Activated CD4-positive, alpha-beta T cell treated with anti-CD3 and anti-CD28 coated beads, Interleukin-2, amount 10 ng/mL, durations not matched to agents 24 days and 14 days (primary cell): ENCODE measurements at regions of chr2 and their contacts with region 1.

Region 1: GRCh38 chr2:144183727-144184126 is 336.2 kb downstream of the ZEB2 start:
- DNase-seq: peak; percentile 92
- H3K4me3 Mint-ChIP-seq: peak overlapping the region; percentile 60
- H3K27ac Mint-ChIP-seq: peak overlapping the region; percentile 86
- H3K4me1 Mint-ChIP-seq: peaks cover 28% of the 10 kb centered on the region
- H3K27me3 Mint-ChIP-seq: no peaks in the 10 kb centered on the region

Region 2: DNA sequence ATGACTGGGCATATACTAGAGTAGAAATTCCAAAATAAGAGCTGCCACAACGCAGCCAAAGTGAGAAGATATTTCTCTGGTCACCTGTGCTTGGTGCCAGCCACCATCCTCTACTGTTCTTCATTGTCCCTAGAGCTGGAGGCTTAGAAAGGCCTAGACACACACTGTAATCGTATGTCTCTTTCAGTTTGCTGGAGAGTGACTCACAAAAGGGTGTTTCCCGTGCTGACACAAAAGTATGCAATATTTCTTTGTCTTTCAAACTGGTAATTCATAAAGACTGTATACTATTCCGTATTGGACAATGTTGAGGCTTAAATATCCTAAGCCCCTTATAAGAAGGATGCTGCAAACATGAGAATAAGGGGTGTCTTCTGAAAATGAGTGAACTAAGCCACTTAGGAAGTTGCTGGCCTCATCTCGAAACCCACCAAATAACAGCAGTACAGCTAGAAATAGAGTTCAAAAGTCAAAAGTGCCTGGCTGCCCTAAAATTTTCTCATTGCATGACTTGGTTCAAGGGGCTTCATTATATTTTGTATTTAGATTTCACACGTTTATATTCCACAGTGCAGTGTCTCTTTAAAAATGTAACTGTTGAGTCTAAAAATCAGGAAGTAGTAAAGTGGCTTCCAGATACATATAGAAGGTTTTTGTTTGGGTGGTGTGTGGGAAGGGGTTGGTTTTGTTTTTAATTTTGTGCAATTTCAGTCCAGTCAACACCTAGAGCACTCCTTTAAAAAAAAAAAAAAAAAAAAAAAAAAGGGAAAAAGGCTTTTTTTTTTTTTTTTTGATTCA is 453.4 kb before region 1 on chr2:
- intact Hi-C with region 1: loop called (anchors 1 kb)
- DNase-seq: peak; percentile 63
- H3K4me3 Mint-ChIP-seq: peak overlapping the region; percentile 47
- H3K27ac Mint-ChIP-seq: peak overlapping the region; percentile 92
- H3K4me1 Mint-ChIP-seq: peaks cover 31% of the 10 kb centered on the region
- H3K27me3 Mint-ChIP-seq: no peaks in the 10 kb centered on the region

Region 3: GRCh38 chr2:144094408-144095151 is 89.1 kb before region 1 on chr2:
- intact Hi-C with region 1: loop called (anchors 5 kb)
- DNase-seq: no peak
- H3K4me3 Mint-ChIP-seq: no peak overlapping the region
- H3K27ac Mint-ChIP-seq: no peak overlapping the region
- H3K4me1 Mint-ChIP-seq: no peaks in the 10 kb centered on the region
- H3K27me3 Mint-ChIP-seq: no peaks in the 10 kb centered on the region

Region 4: DNA sequence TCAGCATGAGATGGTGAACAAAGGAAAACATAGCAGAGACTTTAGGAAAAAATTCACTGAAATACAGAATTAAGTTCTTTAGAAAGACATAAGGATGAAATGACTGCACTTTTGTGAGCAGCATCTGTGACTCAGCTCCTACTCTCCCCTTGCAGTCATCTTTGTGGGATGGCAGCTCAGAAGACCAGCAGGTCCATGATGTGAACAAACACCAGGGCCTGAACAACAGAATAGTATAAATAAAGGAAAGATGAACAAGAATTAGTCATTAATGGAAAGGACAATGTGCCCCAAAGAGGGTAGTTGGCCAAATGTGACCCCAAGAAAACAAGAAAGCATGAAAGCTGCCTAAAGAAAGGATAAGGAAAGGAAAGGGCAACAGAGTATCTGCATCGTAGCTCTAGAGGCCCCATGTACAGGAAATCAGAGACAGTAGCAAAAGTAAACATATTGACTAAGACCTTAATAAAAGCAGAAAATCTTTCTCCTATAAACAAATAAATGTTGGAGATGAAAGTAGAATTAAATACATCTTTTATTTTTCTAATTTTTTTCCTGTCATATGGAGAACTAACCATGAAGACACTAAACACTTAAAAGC is 18.2 kb after region 1 on chr2:
- intact Hi-C with region 1: loop called (anchors 2 kb)
- DNase-seq: no peak
- H3K4me3 Mint-ChIP-seq: no peak overlapping the region
- H3K27ac Mint-ChIP-seq: peak overlapping the region; percentile 30
- H3K4me1 Mint-ChIP-seq: peaks cover 26% of the 10 kb centered on the region
- H3K27me3 Mint-ChIP-seq: no peaks in the 10 kb centered on the region

Region 5: DNA sequence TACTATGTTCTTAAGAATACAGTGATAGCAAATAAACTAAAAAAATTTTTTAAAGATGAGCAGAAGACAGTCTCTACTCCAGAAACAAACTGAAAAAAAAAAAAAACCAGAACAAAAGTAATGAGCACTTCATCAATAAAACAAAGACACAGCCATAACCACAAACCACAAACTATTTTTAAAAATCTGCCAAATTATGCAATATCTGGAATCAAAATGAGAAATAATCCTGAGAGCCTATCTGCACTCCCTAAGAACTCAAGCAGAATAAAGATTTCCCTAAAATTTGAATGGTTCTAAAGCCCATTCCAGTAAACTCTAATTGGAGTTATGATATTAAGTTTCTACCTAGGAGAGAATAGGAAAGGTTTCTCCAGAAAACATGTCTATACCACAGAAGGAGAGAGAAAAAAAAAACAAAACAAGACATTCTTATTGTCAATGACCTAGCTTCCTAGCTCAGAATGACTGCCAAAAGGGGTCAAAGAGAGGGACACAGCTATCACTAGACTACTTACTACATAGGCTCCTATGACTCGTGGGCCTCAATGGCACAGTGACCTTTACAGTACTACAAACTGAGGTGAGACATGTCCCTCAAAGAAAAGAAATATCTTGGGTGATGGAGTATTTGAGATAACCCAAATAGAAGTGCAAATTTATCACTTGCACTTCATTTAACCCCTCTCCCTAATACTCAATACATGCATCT is 73.4 kb after region 1 on chr2:
- intact Hi-C with region 1: loop called (anchors 5 kb)
- DNase-seq: peak; percentile 48
- H3K4me3 Mint-ChIP-seq: no peak overlapping the region
- H3K27ac Mint-ChIP-seq: peak overlapping the region; percentile 74
- H3K4me1 Mint-ChIP-seq: peaks cover 28% of the 10 kb centered on the region
- H3K27me3 Mint-ChIP-seq: no peaks in the 10 kb centered on the region

Region 6: GRCh38 chr2:144414324-144414845 is 230.7 kb after region 1 on chr2:
- intact Hi-C with region 1: loop called (anchors 1 kb)
- DNase-seq: no peak
- H3K4me3 Mint-ChIP-seq: peak overlapping the region; percentile 12
- H3K27ac Mint-ChIP-seq: peak overlapping the region; percentile 55
- H3K4me1 Mint-ChIP-seq: peaks cover 18% of the 10 kb centered on the region
- H3K27me3 Mint-ChIP-seq: no peaks in the 10 kb centered on the region